HepG2 (cell line): ENCODE measurements at regions of chr5 and their contacts with region 1.

Region 1: GRCh38 chr5:171207256-171207847 is 101.7 kb upstream of the TLX3 start:
- DNase-seq: peak; percentile 27
- ATAC-seq: no peak; the same call in 1 of the 3 replicates
- H3K4me3 ChIP-seq: no peak overlapping the region
- H3K27ac ChIP-seq: no peak overlapping the region
- H3K4me1 ChIP-seq: no peaks in the 10 kb centered on the region
- H3K27me3 ChIP-seq: no peaks in the 10 kb centered on the region
- CTCF ChIP-seq: peak; percentile 54
- EP300 ChIP-seq: no peak
- POLR2A ChIP-seq: no peak
- RAD21 ChIP-seq: no peak

Region 2: GRCh38 chr5:170267431-170268152 is 939.8 kb before region 1 on chr5:
- CTCF ChIA-PET with region 1: no interaction called
- POLR2A ChIA-PET with region 1: no interaction called
- in situ Hi-C with region 1: no loop called
- intact Hi-C with region 1: no loop called
- DNase-seq: peak; percentile 28
- ATAC-seq: peak; percentile 93
- H3K4me3 ChIP-seq: no peak overlapping the region
- H3K27ac ChIP-seq: no peak overlapping the region
- H3K4me1 ChIP-seq: no peaks in the 10 kb centered on the region
- H3K27me3 ChIP-seq: peaks cover 1 to 15% of the 10 kb centered on the region in 2 experiments; a peak in 2 of 5 replicates
- CTCF ChIP-seq: peak; percentile 64
- EP300 ChIP-seq: no peak
- POLR2A ChIP-seq: no peak
- RAD21 ChIP-seq: no peak

Region 3: GRCh38 chr5:171336521-171337209 is 129.3 kb after region 1 on chr5:
- CTCF ChIA-PET with region 1: interaction called, 14 read pairs
- POLR2A ChIA-PET with region 1: no interaction called
- in situ Hi-C with region 1: loop called (anchors 5 kb)
- intact Hi-C with region 1: no loop called
- DNase-seq: no peak
- ATAC-seq: peak; percentile 71
- H3K4me3 ChIP-seq: no peak overlapping the region
- H3K27ac ChIP-seq: no peak overlapping the region
- H3K4me1 ChIP-seq: no peaks in the 10 kb centered on the region
- H3K27me3 ChIP-seq: peaks cover 2 to 28% of the 10 kb centered on the region in 2 experiments; a peak in 4 of 5 replicates
- CTCF ChIP-seq: peak; percentile 55
- EP300 ChIP-seq: no peak
- POLR2A ChIP-seq: no peak
- RAD21 ChIP-seq: no peak

Region 4: GRCh38 chr5:171776770-171777759 is 569.7 kb after region 1 on chr5:
- CTCF ChIA-PET with region 1: no interaction called
- POLR2A ChIA-PET with region 1: no interaction called
- in situ Hi-C with region 1: no loop called
- intact Hi-C with region 1: no loop called
- DNase-seq: no peak
- ATAC-seq: no peak
- H3K4me3 ChIP-seq: no peak overlapping the region
- H3K27ac ChIP-seq: no peak overlapping the region
- H3K4me1 ChIP-seq: no peaks in the 10 kb centered on the region; the same call in 1 of the 2 replicates
- H3K27me3 ChIP-seq: peaks cover 0 to 13% of the 10 kb centered on the region in 2 experiments; a peak in 3 of 5 replicates
- CTCF ChIP-seq: no peak
- EP300 ChIP-seq: no peak
- POLR2A ChIP-seq: no peak
- RAD21 ChIP-seq: no peak